CD4-positive, alpha-beta memory T cell (primary cell): ENCODE measurements at regions of chr3 and their contacts with region 1.

Region 1: DNA sequence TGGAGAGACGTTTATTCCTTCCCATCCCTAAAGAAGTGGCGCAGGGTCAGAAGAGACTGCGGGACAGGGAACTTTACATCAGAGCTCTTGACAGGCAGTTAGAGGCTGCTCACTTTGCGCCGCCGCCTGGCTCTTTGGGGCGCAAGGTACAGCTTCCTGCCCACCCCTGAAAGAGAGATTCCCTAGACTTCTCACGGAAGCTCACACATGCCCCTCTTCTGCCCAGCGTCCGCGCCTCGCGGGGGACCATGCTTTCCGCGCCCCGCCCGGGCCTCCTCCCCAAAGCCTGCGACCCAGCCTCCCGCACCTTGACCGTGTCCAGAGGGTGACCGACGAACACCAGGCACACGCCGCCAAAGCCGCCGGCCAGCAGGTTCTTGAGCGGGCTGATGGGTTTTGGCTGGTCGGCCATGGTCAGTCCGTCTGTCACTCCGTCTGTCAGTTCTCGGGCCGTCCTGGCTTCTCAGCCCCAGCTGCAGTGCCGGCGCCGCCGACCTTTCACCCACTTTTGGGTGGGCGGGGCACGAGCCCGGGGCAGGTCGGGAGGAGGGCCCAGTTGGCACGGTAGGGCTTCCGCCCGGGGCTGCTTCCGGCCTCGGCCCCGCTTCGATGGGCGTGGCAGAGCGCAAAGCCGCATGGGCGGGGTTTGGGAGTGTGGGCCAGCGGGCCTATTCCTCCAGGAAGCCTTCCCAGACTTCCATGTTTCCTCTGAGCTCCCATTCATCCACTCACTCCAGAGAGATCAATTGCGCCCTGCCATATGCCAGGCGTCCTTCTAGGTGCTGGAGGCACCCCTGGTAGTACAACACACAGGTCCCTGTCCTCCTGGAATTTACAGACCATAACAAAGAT is at the start of gene SLC25A20:
- DNase-seq: peak; percentile 85 to 89 (median 86)
- H3K4me3 ChIP-seq: peak within 1 kb of the TSS; percentile 76 to 98
- H3K4me3 Mint-ChIP-seq: peak within 1 kb of the TSS; percentile 91 to 97 (median 96)
- H3K27ac ChIP-seq: peak within 1 kb of the TSS; percentile 76
- H3K27ac Mint-ChIP-seq: peak within 1 kb of the TSS; percentile 71 to 97 (median 96)
- H3K4me1 ChIP-seq: peaks cover 39% of the 10 kb centered on the region
- H3K4me1 Mint-ChIP-seq: peaks cover 23 to 61% (median 39%) of the 10 kb centered on the region in 4 donors
- H3K27me3 ChIP-seq: no peaks in the 10 kb centered on the region
- H3K27me3 Mint-ChIP-seq: no peaks in the 10 kb centered on the region
- total RNA-seq, gene SLC25A20: 12.7 to 19.2 TPM

Region 2: DNA sequence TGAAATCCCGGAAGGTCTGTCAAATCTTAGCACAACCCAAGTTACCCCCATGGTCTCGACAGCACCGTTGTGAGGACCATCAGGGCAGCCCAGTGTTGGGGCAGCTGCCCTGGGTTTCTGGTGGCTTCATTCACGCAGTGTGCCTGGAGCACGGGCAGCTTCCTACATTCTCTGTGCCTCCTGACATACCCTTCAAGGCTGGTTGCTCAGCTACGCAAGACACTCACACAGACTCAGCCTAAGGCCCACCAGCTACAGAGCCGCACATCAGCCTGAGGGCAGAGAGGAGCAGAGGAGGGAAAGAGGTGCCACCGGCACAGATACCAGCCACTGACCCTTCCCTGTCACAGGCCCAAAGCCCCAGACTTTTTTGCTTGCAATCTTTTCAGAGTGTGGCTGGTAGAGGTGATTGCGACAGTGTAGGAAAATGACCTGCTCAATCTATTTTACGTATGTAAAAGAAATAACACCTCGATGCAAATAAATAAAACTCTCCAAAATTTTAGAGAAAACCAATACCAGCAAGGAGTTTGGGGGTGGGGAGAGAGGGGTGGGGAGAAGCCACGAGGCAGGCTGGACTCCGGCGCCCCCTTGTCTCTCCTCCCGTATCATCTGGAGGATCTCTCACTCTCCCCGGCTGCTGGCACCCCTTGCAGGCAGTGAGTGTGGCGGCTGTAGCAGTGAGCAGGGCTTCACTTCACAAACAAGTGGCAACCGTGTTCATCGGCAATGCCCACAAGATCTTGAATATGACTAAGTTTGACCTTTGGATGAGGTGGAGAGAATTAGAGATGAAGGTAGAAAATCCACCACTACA is 1332.7 kb before region 1 on chr3:
- CTCF ChIA-PET with region 1: no interaction called
- POLR2A ChIA-PET with region 1: no interaction called
- intact Hi-C with region 1: no loop called
- DNase-seq: no peak
- H3K4me3 ChIP-seq: no peak overlapping the region
- H3K4me3 Mint-ChIP-seq: no peak overlapping the region
- H3K27ac ChIP-seq: no peak overlapping the region
- H3K27ac Mint-ChIP-seq: no peak overlapping the region
- H3K4me1 ChIP-seq: no peaks in the 10 kb centered on the region
- H3K4me1 Mint-ChIP-seq: no peaks in the 10 kb centered on the region
- H3K27me3 ChIP-seq: no peaks in the 10 kb centered on the region
- H3K27me3 Mint-ChIP-seq: no peaks in the 10 kb centered on the region

Region 3: DNA sequence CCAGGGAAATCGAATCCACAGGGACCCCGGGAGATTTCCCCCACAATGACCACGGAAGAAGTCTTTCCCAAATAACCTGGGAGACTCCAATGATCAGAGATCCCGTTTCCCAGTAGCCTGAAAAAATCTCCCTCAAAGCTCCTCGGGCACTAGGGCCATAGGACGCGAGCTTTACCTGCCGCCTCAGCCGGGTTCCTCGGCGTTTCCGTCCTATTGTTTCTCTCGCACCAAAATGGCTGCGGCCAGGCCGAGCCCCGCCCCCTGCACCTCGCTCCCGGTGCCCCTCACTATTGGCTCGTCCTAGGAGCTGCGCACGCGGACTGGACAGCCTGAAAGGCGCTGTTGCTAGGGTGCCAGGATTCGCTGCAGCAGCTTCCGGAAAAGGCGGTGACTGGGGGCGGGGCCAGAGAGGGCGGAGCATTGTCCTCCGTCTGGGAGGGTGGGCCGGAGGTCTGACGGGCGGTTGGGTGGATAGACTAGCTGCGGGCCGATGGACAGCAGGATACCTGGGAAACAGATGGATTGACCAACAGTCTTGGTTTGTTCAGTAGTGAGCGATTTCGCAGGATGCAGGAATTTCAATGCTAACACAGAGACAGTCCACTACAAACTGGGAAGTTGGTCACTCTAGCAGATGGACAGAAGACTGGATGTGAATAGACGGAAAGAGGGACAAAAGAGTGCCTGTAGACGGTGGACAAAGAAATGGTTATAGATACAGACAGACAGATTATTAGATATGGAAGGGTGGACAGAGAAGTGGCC is 181.4 kb before region 1 on chr3 and contains the start of gene IP6K2:
- CTCF ChIA-PET with region 1: interaction called, 11 read pairs
- POLR2A ChIA-PET with region 1: interaction called, 12 read pairs
- intact Hi-C with region 1: loop called (anchors 5 kb)
- DNase-seq: peak; percentile 95 to 99 (median 97)
- H3K4me3 ChIP-seq: peak within 1 kb of the TSS; percentile 90 to 98
- H3K4me3 Mint-ChIP-seq: peak within 1 kb of the TSS; percentile 98 to 100 (median 99)
- H3K27ac ChIP-seq: peak within 1 kb of the TSS; percentile 91
- H3K27ac Mint-ChIP-seq: peak within 1 kb of the TSS; percentile 88 to 99 (median 99)
- H3K4me1 ChIP-seq: peaks cover 44% of the 10 kb centered on the region
- H3K4me1 Mint-ChIP-seq: peaks cover 28 to 51% (median 37%) of the 10 kb centered on the region in 4 donors
- H3K27me3 ChIP-seq: no peaks in the 10 kb centered on the region
- H3K27me3 Mint-ChIP-seq: no peaks in the 10 kb centered on the region
- total RNA-seq, gene IP6K2: 84.5 to 91.8 TPM

Region 4: DNA sequence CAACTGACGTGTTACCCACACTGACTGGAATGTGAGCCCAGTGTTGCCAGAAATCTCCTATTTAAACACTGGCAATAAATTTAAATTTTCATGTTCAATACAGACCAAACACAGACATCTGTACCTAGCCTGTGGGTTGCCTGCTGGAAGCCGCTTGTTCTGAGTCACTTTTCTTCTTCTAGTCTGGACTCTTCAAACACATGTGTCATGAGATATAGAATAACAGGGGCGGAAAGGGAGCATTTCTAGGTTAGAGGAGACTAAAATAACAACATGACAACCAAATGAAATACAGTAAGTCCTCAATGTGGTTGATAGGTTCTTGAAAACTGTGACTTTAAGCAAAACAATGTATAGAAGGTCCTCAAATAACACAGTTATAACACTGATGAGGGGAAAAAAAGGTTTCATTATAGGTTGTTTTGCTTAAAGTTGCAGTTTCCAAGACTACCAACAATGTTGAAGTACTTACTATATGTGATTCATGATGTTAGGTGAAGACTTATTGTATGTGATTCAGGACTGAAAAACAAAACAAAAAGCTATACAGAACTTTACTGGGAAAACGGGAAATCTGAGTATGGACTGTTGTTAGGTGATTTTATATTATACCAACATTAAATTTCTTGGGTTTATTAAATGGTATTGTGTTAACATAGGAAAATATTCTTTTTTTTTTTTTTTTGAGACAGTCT is 114.0 kb before region 1 on chr3:
- CTCF ChIA-PET with region 1: no interaction called
- POLR2A ChIA-PET with region 1: no interaction called
- intact Hi-C with region 1: loop called (anchors 5 kb)
- DNase-seq: no peak
- H3K4me3 ChIP-seq: no peak overlapping the region
- H3K4me3 Mint-ChIP-seq: no peak overlapping the region
- H3K27ac ChIP-seq: no peak overlapping the region
- H3K27ac Mint-ChIP-seq: peak overlapping the region in 3 of 7 donors; percentile 19 to 43 (median 37)
- H3K4me1 ChIP-seq: peaks cover 11% of the 10 kb centered on the region
- H3K4me1 Mint-ChIP-seq: peaks cover 11 to 15% (median 13%) of the 10 kb centered on the region in 4 donors
- H3K27me3 ChIP-seq: no peaks in the 10 kb centered on the region
- H3K27me3 Mint-ChIP-seq: no peaks in the 10 kb centered on the region

Region 5: GRCh38 chr3:48847504-48848423 is 50.8 kb before region 1 on chr3 and contains the start of gene PRKAR2A:
- CTCF ChIA-PET with region 1: no interaction called
- POLR2A ChIA-PET with region 1: interaction called, 12 read pairs
- intact Hi-C with region 1: loop called (anchors 2 kb)
- DNase-seq: peak; percentile 69 to 82 (median 76)
- H3K4me3 ChIP-seq: peak within 1 kb of the TSS; percentile 69 to 89
- H3K4me3 Mint-ChIP-seq: peak within 1 kb of the TSS; percentile 85 to 91 (median 89)
- H3K27ac ChIP-seq: peak within 1 kb of the TSS; percentile 74
- H3K27ac Mint-ChIP-seq: peak within 1 kb of the TSS; percentile 94 to 98 (median 97)
- H3K4me1 ChIP-seq: peaks cover 33% of the 10 kb centered on the region
- H3K4me1 Mint-ChIP-seq: peaks cover 19 to 39% (median 29%) of the 10 kb centered on the region in 4 donors
- H3K27me3 ChIP-seq: no peaks in the 10 kb centered on the region
- H3K27me3 Mint-ChIP-seq: no peaks in the 10 kb centered on the region
- total RNA-seq, gene PRKAR2A: 41.7 to 45.0 TPM

Region 6: DNA sequence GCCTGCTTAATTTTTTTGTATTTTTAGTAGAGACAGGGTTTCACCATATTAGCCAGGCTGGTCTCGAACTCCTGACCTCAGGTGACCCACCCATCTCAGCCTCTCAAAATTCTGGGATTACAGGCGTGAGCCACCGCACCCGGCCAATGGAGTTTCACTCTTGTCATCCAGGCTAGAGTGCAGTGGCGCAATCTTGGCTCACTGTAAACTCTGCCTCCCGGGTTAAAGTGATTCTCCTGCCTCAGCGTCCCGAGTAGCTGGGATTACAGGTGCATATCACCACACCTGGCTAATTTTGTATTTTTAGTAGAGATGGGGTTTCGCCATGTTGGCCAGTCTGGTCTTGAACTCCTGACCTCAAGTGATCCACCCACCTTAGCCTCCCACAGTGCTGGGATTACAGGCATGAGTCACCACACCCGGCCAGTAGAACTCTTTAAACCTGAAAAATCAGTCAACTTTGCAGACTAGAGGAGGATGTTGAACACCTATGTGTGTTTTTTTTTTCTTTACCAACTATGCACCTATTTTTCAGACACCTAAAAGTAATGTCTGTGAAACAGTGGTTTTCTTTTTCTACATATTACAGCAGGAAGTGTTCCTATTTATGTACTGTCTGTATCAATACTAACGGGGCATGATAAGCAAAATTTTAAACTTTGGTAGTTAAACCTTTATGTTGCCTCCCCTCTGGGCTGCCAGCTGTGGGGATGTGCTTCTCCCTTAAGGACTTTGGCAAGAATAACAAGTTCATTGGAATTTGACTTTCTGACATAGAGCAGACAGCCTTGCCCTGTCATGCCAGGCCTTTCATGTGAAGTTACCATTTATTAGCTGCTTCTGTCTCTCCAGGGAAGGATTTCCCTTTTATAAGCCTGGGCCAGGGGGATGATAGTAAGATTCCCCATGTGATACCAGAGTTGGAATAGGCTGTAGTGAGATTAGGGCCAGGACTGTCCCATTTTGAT is 28.1 kb after region 1 on chr3:
- CTCF ChIA-PET with region 1: interaction called, 45 read pairs
- POLR2A ChIA-PET with region 1: interaction called, 3 read pairs
- intact Hi-C with region 1: no loop called
- DNase-seq: no peak
- H3K4me3 ChIP-seq: no peak overlapping the region
- H3K4me3 Mint-ChIP-seq: peak overlapping the region in 6 of 8 donors; percentile 11 to 71 (median 42)
- H3K27ac ChIP-seq: no peak overlapping the region
- H3K27ac Mint-ChIP-seq: peak overlapping the region in 5 of 7 donors; percentile 18 to 84 (median 69)
- H3K4me1 ChIP-seq: peaks cover 52% of the 10 kb centered on the region
- H3K4me1 Mint-ChIP-seq: peaks cover 38 to 55% (median 45%) of the 10 kb centered on the region in 4 donors
- H3K27me3 ChIP-seq: no peaks in the 10 kb centered on the region
- H3K27me3 Mint-ChIP-seq: no peaks in the 10 kb centered on the region